Tibial artery (tissue), 4 donors: ENCODE measurements at regions of chr2 and their contacts with region 1.

Region 1: DNA sequence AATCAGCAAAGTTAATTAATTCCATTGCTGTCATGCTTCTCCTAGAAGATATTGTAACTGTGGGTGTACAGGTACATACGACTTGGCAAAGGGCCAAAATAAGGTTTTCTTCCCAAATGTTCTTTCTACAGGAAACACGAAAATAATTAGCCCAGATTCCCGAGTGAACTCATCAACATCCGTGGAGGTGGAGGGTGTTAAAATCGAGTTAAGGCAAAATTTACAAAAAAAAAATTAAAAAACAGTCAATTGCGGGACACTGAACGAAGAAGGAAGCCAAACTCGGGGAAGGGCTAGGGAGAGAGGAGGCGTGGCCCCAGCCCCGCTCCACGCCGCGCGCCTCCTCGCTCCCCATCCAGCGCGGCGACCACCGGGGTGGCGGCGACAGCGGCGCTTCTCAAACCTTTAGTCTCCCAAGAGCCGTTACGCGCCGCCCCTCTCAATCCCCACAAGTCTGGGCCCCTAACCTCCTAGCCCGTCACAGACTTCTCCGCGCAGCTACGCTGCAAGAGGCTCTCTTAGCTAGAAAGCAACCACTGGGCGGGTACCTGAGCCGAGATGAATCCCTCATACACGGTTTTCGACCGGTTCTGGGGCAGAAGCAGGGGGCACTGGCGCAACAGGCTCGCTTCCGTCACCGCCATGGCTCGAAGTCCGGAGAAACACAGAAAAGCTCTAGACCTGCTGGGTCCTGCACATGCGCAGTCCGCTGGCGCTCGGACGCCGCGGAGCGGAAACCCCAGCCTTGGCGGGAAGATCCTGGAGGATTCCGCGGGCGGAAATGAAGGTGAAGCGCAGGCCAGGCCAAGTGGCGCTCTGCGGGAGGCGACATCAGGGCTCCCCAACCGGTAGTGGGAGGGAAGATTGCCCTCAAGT is at the start of gene FANCL:
- DNase-seq: peak; percentile 85 to 92
- H3K4me3 ChIP-seq: peak within 1 kb of the TSS; percentile 83 to 87
- H3K27ac ChIP-seq: peak within 1 kb of the TSS; percentile 78 to 81
- H3K4me1 ChIP-seq: peaks cover 0 to 16% (median 6%) of the 10 kb centered on the region in 4 donors
- H3K27me3 ChIP-seq: no peaks in the 10 kb centered on the region
- CTCF ChIP-seq: no peak

Region 2: DNA sequence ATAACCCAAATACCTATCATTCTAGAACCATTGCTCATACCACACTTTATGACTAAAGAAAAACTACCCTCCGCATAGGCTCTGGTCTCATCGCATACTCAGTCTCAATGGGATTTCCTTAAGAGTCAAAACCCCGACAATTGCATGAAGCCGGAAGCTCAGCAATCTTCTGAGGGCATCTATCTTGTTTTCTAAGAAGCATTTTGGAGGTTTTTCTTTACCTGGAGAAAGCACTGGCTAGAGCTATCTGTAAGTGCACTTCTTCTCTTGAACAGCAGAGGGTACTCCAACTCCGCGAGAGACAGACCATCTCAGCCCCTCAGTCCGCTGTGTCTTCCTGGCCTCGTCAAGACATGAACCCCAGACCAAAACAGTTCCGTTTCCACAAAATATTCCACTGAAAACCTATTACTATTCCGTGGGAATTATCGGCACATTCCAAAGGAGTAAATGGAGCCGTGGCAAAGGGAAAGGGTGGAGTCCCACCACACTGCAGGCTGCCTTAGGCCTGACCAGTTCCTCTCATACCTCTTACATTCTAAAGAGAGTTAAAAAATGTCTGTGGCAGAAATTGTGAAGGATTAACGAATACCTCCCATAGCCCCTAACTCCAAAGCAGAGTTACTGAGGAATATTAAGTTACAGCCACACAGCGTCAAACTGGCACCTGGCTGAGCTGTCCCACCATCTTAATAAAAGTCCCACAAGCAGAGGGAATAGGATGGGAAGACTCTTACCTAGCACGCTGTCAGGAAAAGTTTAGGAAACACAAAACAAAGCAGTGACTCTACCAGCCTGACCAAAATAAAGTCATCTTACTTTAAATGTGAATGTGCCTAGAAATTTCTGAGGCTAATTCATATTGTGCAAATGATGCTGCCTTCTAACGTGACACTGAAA is 519.9 kb before region 1 on chr2:
- intact Hi-C with region 1: no loop called
- DNase-seq: no peak
- H3K4me3 ChIP-seq: peak overlapping the region in 1 of 2 donors; percentile 8
- H3K27ac ChIP-seq: no peak overlapping the region
- H3K4me1 ChIP-seq: peaks cover 0 to 7% (median 0%) of the 10 kb centered on the region in 4 donors
- H3K27me3 ChIP-seq: no peaks in the 10 kb centered on the region
- CTCF ChIP-seq: peak; percentile 44 to 59

Region 3: GRCh38 chr2:58046585-58047372 is 194.1 kb before region 1 on chr2 and contains the start of gene VRK2:
- intact Hi-C with region 1: loop called (anchors 10 kb)
- DNase-seq: peak; percentile 86 to 92
- H3K4me3 ChIP-seq: peak within 1 kb of the TSS; percentile 83 to 92
- H3K27ac ChIP-seq: peak within 1 kb of the TSS; percentile 96 to 99
- H3K4me1 ChIP-seq: peaks cover 0 to 25% (median 12%) of the 10 kb centered on the region in 4 donors
- H3K27me3 ChIP-seq: no peaks in the 10 kb centered on the region
- CTCF ChIP-seq: no peak